ENCODE measurements at regions of chr1 and their contacts with region 1.

Region 1: DNA sequence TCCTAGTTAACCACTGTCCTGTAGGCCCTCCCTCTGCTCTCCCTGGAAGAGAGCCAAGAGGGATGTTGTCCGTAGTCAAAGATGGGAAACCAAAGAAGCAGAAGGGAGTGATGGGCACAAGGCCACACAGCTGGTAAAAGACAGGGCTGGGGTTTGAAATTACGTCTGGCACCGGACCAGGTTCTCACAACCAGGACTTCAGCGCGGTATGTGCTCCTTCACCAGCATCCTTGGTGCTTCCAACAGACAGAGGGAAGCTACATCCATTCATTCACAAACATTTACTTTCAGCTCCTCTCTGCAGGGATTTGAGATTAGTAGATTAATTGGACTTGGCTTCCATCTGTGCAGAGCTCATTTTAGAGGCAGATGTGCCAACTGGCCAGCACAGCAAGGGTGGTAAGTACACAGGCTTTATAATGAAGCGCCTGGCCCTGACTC is 191.2 kb downstream of the TRABD2B start:
- DNase-seq: no peak
- H3K4me3 ChIP-seq: no peak overlapping the region
- CTCF ChIP-seq: no peak
- POLR2A ChIP-seq: no peak

Region 2: DNA sequence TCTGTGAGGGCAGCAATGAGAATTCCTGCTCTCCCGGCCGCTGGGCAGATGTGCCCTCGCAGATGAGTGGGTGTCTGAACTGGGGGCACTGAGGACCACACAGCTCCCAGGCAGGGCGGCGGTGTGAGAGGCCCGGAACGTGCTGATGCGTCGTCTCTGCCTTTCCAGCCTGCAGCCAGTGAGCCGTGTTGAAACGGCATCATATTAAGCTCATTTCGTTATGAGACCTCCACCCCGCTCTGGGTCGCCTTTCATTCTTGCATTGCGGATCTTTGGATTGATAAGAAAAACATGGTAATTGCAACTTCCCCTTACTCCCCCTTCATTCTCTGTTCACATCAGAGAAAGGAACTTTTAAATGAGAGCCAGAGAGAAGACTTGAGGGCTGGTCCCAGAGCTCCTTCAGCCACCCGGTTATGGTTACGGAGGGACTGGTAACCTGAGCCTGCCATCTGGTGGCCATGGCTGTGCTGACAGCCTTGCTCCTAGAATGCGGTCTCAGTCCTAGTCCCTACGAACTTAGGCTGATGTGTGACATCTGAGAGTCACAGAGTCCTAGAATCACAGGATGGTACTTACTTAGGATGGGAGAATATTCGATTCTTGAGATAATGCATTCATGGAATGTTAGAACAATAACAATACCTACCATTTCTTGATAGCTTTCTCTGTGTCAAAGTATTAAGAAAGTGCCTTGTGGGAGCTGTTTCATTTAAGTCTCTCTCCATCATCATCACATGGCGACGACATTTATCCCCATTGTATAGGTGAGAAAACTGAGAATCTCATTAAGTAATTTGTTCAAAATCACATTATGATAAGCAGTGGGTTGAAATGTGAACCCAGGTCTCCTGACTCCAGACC is 79.7 kb before region 1 on chr1:
- intact Hi-C with region 1: no loop called
- DNase-seq: peak; percentile 72 to 92
- H3K4me3 ChIP-seq: no peak overlapping the region
- CTCF ChIP-seq: no peak
- POLR2A ChIP-seq: no peak

Region 3: GRCh38 chr1:47883965-47884364 is 78.0 kb after region 1 on chr1:
- intact Hi-C with region 1: loop called (anchors 1 kb)
- DNase-seq: no peak
- H3K4me3 ChIP-seq: no peak overlapping the region
- CTCF ChIP-seq: no peak
- POLR2A ChIP-seq: no peak

Measured in lower leg skin (tissue), 4 donors.